Mucosa of descending colon (tissue), 3 donors: ENCODE measurements at regions of chr17 and their contacts with region 1.

Region 1: GRCh38 chr17:29705386-29705785 is 82.7 kb upstream of the CORO6 start:
- DNase-seq: no peak
- ATAC-seq: peak; percentile 17
- H3K4me3 ChIP-seq: no peak overlapping the region
- H3K4me1 ChIP-seq: peaks cover 3% of the 10 kb centered on the region
- CTCF ChIP-seq: no peak

Region 2: GRCh38 chr17:29524460-29525091 is 180.8 kb before region 1 on chr17:
- intact Hi-C with region 1: no loop called
- DNase-seq: no peak
- ATAC-seq: no peak
- H3K4me3 ChIP-seq: no peak overlapping the region
- H3K4me1 ChIP-seq: no peaks in the 10 kb centered on the region
- CTCF ChIP-seq: no peak

Region 3: GRCh38 chr17:29645515-29646051 is 59.8 kb before region 1 on chr17:
- intact Hi-C with region 1: no loop called
- DNase-seq: peak in 1 of 3 donors; percentile 36
- ATAC-seq: peak; percentile 53
- H3K4me3 ChIP-seq: no peak overlapping the region
- H3K4me1 ChIP-seq: no peaks in the 10 kb centered on the region
- CTCF ChIP-seq: no peak

Region 4: GRCh38 chr17:29760761-29761696 is 55.6 kb after region 1 on chr17:
- intact Hi-C with region 1: loop called in 1 of 2 experiments (anchors 2 kb)
- DNase-seq: peak; percentile 87 to 94 (median 91)
- ATAC-seq: peak; percentile 98
- H3K4me3 ChIP-seq: peak overlapping the region; percentile 7
- H3K4me1 ChIP-seq: no peaks in the 10 kb centered on the region
- CTCF ChIP-seq: no peak